ENCODE measurements at regions of chr2 and their contacts with region 1.

Region 1: GRCh38 chr2:225660262-225661131 is 261.0 kb downstream of the NYAP2 start:
- DNase-seq: peak; percentile 54 to 61
- ATAC-seq: no peak
- H3K4me3 ChIP-seq: no peak overlapping the region
- H3K27ac ChIP-seq: no peak overlapping the region
- H3K4me1 ChIP-seq: no peaks in the 10 kb centered on the region
- H3K27me3 ChIP-seq: peaks cover 0 to 33% (median 7%) of the 10 kb centered on the region in 7 donors
- CTCF ChIP-seq: peak; percentile 67 to 87 (median 82)

Region 2: GRCh38 chr2:225122583-225123486 is 537.7 kb before region 1 on chr2:
- intact Hi-C with region 1: loop called in 4 of 10 experiments (anchors 5 to 10 kb)
- DNase-seq: no peak
- ATAC-seq: no peak
- H3K4me3 ChIP-seq: no peak overlapping the region
- H3K27ac ChIP-seq: no peak overlapping the region
- H3K4me1 ChIP-seq: no peaks in the 10 kb centered on the region
- H3K27me3 ChIP-seq: peaks cover 0 to 4% (median 0%) of the 10 kb centered on the region in 7 donors
- CTCF ChIP-seq: peak in 7 of 9 donors; percentile 20 to 45 (median 38)

Region 3: GRCh38 chr2:225270861-225271260 is 389.6 kb before region 1 on chr2:
- intact Hi-C with region 1: loop called in 1 of 10 experiments (anchors 10 kb)
- DNase-seq: no peak
- ATAC-seq: no peak
- H3K4me3 ChIP-seq: no peak overlapping the region
- H3K27ac ChIP-seq: no peak overlapping the region
- H3K4me1 ChIP-seq: no peaks in the 10 kb centered on the region
- H3K27me3 ChIP-seq: no peaks in the 10 kb centered on the region
- CTCF ChIP-seq: no peak

Region 4: GRCh38 chr2:225282858-225283710 is 377.4 kb before region 1 on chr2:
- intact Hi-C with region 1: loop called in 4 of 10 experiments (anchors 5 to 10 kb)
- DNase-seq: no peak
- ATAC-seq: no peak
- H3K4me3 ChIP-seq: no peak overlapping the region
- H3K27ac ChIP-seq: no peak overlapping the region
- H3K4me1 ChIP-seq: no peaks in the 10 kb centered on the region
- H3K27me3 ChIP-seq: no peaks in the 10 kb centered on the region
- CTCF ChIP-seq: peak in 7 of 9 donors; percentile 22 to 65 (median 34)

Region 5: GRCh38 chr2:225411452-225411851 is 249.0 kb before region 1 on chr2:
- intact Hi-C with region 1: no loop called
- DNase-seq: no peak
- ATAC-seq: no peak
- H3K4me3 ChIP-seq: no peak overlapping the region
- H3K27ac ChIP-seq: no peak overlapping the region
- H3K4me1 ChIP-seq: no peaks in the 10 kb centered on the region
- H3K27me3 ChIP-seq: no peaks in the 10 kb centered on the region
- CTCF ChIP-seq: no peak

Region 6: GRCh38 chr2:225526760-225527390 is 133.6 kb before region 1 on chr2:
- intact Hi-C with region 1: no loop called
- DNase-seq: no peak
- ATAC-seq: no peak
- H3K4me3 ChIP-seq: no peak overlapping the region
- H3K27ac ChIP-seq: no peak overlapping the region
- H3K4me1 ChIP-seq: no peaks in the 10 kb centered on the region
- H3K27me3 ChIP-seq: no peaks in the 10 kb centered on the region
- CTCF ChIP-seq: no peak

Region 7: GRCh38 chr2:225598897-225599296 is 61.6 kb before region 1 on chr2:
- intact Hi-C with region 1: no loop called
- DNase-seq: no peak
- ATAC-seq: peak in 1 of 8 donors; percentile 51
- H3K4me3 ChIP-seq: no peak overlapping the region
- H3K27ac ChIP-seq: no peak overlapping the region
- H3K4me1 ChIP-seq: no peaks in the 10 kb centered on the region
- H3K27me3 ChIP-seq: no peaks in the 10 kb centered on the region
- CTCF ChIP-seq: no peak

Region 8: DNA sequence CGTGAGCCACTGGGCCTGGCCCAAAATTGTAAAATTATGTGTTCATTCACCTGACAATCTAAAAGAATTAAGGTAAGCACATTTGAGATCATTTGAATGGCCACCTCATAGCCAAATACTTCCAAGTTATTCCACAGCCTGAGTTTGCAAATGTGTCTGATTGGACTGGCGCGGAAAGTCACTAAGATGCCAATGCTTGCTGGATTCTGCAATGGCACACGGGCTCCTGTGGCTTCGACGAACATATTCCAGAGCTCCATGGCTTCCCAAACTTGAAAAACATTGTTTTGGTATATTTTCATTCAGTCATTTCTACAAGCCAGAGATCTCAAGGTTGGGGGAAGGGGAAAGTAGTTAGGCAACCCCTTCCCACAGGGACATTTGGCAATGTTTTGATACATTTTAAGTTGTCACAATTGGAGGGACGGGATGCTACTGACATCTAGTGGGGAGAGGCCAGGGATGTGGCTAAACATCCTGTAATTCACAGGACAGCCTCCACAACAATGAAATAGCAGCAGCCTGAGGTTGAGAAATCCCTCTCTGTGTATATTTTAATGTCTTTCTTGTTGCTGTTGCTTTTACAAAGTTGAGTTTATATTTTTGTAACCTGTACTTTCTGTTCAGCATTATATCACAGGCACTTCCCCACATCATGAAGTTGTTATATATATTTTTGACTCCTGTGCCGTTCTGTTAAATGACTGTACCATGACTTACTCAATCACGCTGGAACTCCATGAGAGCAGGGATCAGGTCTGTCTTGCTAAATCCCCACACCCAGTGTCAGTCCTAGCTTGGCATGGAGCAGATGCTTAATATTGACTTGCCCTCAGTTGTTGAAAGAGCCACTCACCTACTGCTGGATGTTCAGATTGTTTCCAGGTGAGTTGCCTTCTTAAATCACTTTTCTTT is 1446.6 kb after region 1 on chr2:
- intact Hi-C with region 1: loop called in 3 of 10 experiments (anchors 5 to 10 kb)
- DNase-seq: no peak
- ATAC-seq: peak in 4 of 8 donors; percentile 25 to 73 (median 56)
- H3K4me3 ChIP-seq: no peak overlapping the region
- H3K27ac ChIP-seq: no peak overlapping the region
- H3K4me1 ChIP-seq: no peaks in the 10 kb centered on the region
- H3K27me3 ChIP-seq: no peaks in the 10 kb centered on the region
- CTCF ChIP-seq: peak; percentile 26 to 69 (median 63)

Measured in heart right ventricle (tissue), 16 donors.